PC-9 (cell line): ENCODE measurements at regions of chr15 and their contacts with region 1.

Region 1: GRCh38 chr15:36883713-36884517 is 216.4 kb downstream of the MEIS2 start:
- DNase-seq: peak in 1 of 2 experiments; percentile 72
- H3K4me3 ChIP-seq: no peak overlapping the region
- H3K27ac ChIP-seq: no peak overlapping the region
- H3K4me1 ChIP-seq: no peaks in the 10 kb centered on the region
- H3K27me3 ChIP-seq: no peaks in the 10 kb centered on the region
- CTCF ChIP-seq: peak; percentile 86

Region 2: GRCh38 chr15:36722555-36722954 is 161.4 kb before region 1 on chr15:
- CTCF ChIA-PET with region 1: no interaction called
- POLR2A ChIA-PET with region 1: no interaction called
- intact Hi-C with region 1: no loop called
- DNase-seq: no peak
- H3K4me3 ChIP-seq: no peak overlapping the region
- H3K27ac ChIP-seq: no peak overlapping the region
- H3K4me1 ChIP-seq: no peaks in the 10 kb centered on the region
- H3K27me3 ChIP-seq: no peaks in the 10 kb centered on the region
- CTCF ChIP-seq: no peak

Region 3: DNA sequence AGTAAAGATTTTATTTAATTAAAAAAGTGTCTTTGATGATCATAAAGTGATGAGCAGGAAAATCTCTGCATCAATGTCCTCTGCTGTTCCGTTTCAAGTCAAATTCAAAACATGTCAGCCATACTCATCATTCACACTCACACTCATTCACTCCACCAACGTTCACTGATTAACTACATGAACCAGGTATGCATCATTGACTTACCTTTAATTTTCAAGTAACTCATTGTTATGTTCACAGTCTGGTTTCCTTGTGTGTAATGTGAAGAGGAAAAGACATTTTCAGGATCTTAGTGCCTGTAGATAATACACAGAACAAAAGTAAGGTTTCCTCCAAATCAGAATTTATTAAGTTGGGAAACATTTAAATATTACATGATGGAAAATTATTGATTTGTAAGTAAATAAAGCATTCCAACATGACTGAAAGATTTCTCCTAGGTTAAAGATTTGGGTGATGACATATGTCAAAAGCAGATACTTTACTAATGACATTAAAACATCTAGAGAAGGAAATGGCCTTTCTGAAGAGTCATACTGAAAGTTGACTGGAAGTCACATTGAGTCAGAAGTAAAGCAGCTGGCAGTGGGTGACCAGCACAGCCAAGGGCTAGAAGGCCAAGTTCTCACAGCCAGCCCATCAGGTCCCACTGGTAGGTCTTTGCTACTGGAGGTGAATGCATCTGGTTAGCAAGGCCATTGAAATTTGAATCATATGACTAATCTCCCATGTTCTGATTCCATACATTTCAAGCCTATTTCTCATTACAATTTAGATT is 52.6 kb before region 1 on chr15:
- CTCF ChIA-PET with region 1: no interaction called
- POLR2A ChIA-PET with region 1: no interaction called
- intact Hi-C with region 1: no loop called
- DNase-seq: peak; percentile 60 to 86
- H3K4me3 ChIP-seq: no peak overlapping the region
- H3K27ac ChIP-seq: peak overlapping the region; percentile 82
- H3K4me1 ChIP-seq: peaks cover 18% of the 10 kb centered on the region
- H3K27me3 ChIP-seq: no peaks in the 10 kb centered on the region
- CTCF ChIP-seq: no peak

Region 4: GRCh38 chr15:37880009-37880834 is 996.3 kb after region 1 on chr15:
- CTCF ChIA-PET with region 1: no interaction called
- POLR2A ChIA-PET with region 1: no interaction called
- intact Hi-C with region 1: loop called (anchors 5 kb)
- DNase-seq: peak in 1 of 2 experiments; percentile 22
- H3K4me3 ChIP-seq: no peak overlapping the region
- H3K27ac ChIP-seq: no peak overlapping the region
- H3K4me1 ChIP-seq: peaks cover 5% of the 10 kb centered on the region; the same call in 1 of the 2 replicates
- H3K27me3 ChIP-seq: no peaks in the 10 kb centered on the region
- CTCF ChIP-seq: peak; percentile 81